Psoas muscle (tissue), 8 donors: ENCODE measurements at regions of chr21 and their contacts with region 1.

Region 1: DNA sequence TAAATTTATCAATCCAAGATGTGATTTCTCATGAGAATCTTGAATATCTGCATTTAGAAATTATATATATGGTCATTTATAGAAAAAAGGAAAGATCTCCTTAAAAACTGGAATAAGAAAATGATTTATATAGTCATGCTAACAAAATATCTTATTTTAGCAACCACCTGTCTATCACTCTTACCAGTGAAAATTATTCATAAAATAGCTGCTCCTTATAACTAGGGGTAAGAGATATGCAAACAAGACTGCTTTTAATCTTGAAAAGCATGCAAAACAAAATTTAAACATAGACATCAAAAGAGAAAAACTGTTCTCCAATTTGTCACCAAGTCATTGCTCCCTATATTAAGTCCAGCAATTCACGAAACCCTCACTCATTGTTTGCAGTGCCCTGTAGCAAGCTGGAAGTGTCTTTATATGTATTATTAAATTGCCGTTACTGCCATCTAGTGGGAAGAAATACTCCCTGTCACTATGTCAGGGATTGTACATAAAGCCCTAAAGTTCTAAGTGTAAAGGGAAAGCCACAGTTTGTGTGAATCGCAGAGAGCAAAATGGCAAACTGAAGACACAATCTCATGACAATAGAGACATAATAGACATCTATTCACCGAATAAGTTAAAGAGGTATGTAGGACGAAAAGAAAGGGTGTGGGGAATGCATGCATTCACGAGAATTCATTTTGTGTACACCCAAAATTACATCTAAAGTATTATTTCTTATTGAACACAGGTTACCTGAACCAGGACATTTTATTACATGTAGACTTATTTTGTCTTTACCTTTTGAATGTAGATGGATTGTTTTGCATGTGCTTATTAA is 600.5 kb downstream of the USP25 start:
- DNase-seq: no peak
- ATAC-seq: peak; percentile 84 to 97 (median 96)
- H3K4me3 ChIP-seq: peak overlapping the region; percentile 23
- H3K27ac ChIP-seq: peak overlapping the region; percentile 0
- H3K4me1 ChIP-seq: peaks cover 8% of the 10 kb centered on the region
- H3K27me3 ChIP-seq: no peaks in the 10 kb centered on the region
- CTCF ChIP-seq: peak; percentile 81

Region 2: DNA sequence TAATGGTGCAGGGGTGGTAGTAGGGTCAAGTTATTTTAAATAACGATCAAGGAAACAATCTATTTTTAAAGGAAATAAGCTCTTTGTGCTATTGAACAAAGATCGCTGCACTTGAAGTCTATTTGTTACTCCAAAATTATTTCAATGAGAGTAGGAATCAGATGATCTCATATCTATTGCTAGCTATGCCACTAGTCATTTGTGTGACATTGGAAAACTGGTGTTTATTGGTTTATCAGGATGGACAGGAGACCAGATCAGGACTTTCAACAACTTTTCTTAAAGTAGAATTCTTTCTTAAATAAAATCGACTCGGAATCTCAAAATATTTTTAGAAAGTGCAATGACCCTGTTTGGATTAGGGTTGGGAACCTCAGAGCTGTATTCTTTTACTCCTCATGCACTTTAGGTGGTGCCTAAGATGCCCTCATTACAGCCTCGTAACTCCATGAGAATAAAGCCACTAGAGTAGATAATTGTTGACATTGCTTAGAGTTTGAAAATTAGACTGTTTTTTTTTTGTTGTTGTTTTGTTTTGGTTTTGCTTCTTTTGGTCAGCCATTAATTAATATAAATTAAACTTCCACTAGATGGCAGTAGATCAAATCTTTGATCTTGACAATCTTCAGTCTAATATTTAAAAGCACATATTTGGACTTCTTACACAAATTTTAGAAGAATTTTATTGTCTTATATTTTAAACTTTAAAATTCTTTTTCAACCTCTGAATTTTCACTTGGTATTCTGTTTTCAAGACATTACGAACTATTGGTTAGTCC is 248.1 kb before region 1 on chr21:
- intact Hi-C with region 1: loop called (anchors 2 to 5 kb)
- DNase-seq: no peak
- ATAC-seq: no peak
- H3K4me3 ChIP-seq: no peak overlapping the region
- H3K27ac ChIP-seq: no peak overlapping the region
- H3K4me1 ChIP-seq: peaks cover 8% of the 10 kb centered on the region
- H3K27me3 ChIP-seq: no peaks in the 10 kb centered on the region
- CTCF ChIP-seq: peak; percentile 54